ENCODE measurements at regions of chr5 and their contacts with region 1.

Region 1: DNA sequence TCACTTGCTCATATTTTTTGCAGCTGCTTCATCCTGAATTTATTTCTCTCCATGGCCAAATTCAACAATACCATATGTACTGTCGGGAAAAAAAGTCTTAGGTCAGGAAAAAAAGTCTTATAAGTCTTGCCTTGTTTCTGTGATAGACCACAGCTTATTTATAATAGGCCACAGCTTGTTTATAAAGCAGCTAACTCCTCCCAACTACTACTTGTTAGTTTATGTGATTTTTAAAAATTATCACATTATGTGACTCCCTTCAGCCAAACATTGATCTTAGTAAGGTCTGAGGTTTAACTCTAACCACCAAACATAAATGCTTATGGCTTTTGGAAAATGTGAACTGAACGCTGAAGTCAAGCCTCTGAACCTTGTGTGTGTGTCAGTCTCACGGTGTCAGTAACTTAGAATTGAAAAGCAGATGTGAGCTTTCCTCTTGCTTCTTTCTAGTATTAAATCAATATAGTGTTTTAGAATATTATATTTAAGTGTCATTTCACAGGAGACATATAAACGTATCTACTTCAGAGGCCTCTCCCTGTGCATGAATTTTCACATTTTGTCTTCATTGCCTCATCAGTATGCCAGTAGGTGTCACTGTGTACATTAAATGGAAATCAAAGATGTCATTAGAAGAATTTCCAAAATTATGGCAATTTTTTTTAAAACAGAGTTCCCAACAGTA is 51.3 kb downstream of the SNX24 start:
- DNase-seq: peak; percentile 54
- H3K4me3 Mint-ChIP-seq: no peak overlapping the region
- H3K27ac Mint-ChIP-seq: no peak overlapping the region
- H3K4me1 Mint-ChIP-seq: peaks cover 4% of the 10 kb centered on the region
- H3K27me3 Mint-ChIP-seq: no peaks in the 10 kb centered on the region
- CTCF ChIP-seq: peak; percentile 71

Region 2: DNA sequence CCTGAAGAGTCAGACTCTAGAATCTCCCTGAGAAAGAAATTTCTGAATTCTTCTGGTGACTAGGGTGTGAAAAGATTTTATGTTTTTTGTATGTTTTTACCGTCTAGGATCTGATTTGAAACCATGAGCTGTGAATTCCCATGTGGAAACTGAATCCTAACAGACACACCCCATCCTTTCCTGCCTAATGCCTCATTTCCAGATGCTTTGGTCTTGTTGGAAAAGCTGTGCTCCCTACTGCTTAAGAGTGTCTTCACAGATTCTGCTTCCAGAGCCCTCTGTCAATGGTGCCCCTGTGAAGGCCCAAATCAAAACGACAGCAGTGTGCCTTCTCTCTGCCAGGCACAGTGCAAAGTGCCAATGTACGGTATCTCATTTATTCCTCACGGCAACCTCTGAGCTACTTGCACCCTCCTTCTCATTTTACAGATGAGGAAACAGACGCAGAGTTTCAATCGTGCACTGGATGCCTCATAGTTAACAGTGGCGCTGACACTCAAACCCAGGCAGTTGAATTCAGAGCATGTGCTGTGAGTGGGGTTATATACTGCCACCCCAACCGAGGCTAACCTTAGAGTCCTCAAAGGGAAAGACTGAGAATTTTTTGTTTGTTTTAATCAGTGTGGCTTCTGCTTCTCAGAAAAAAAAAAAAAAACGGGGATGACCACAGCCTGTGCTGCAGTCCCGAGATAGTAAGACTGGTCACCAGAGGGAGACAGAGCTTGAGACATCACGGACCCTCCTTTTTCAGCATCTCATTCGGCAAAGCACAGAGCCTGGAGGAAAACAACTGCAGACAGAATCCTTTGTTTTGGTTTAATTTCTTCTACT is 396.3 kb before region 1 on chr5:
- CTCF ChIA-PET with region 1: interaction called, 3 read pairs
- POLR2A ChIA-PET with region 1: no interaction called
- intact Hi-C with region 1: loop called (anchors 5 kb)
- DNase-seq: peak; percentile 76
- H3K4me3 Mint-ChIP-seq: peak overlapping the region; percentile 5
- H3K27ac Mint-ChIP-seq: peak overlapping the region; percentile 71
- H3K4me1 Mint-ChIP-seq: peaks cover 23% of the 10 kb centered on the region
- H3K27me3 Mint-ChIP-seq: no peaks in the 10 kb centered on the region
- CTCF ChIP-seq: peak; percentile 53

Region 3: GRCh38 chr5:122882837-122883236 is 13.9 kb before region 1 on chr5:
- CTCF ChIA-PET with region 1: interaction called, 15 read pairs
- POLR2A ChIA-PET with region 1: no interaction called
- intact Hi-C with region 1: no loop called
- DNase-seq: peak; percentile 39
- H3K4me3 Mint-ChIP-seq: peak overlapping the region; percentile 2
- H3K27ac Mint-ChIP-seq: peak overlapping the region; percentile 8
- H3K4me1 Mint-ChIP-seq: peaks cover 24% of the 10 kb centered on the region
- H3K27me3 Mint-ChIP-seq: no peaks in the 10 kb centered on the region
- CTCF ChIP-seq: no peak

Region 4: GRCh38 chr5:122915717-122916461 is 19.1 kb after region 1 on chr5:
- CTCF ChIA-PET with region 1: interaction called, 13 read pairs
- POLR2A ChIA-PET with region 1: no interaction called
- intact Hi-C with region 1: no loop called
- DNase-seq: no peak
- H3K4me3 Mint-ChIP-seq: no peak overlapping the region
- H3K27ac Mint-ChIP-seq: peak overlapping the region; percentile 2
- H3K4me1 Mint-ChIP-seq: peaks cover 12% of the 10 kb centered on the region
- H3K27me3 Mint-ChIP-seq: no peaks in the 10 kb centered on the region
- CTCF ChIP-seq: no peak

Region 5: GRCh38 chr5:123036391-123037103 is 139.8 kb after region 1 on chr5 and contains the start of gene PPIC:
- CTCF ChIA-PET with region 1: no interaction called
- POLR2A ChIA-PET with region 1: interaction called, 3 read pairs
- intact Hi-C with region 1: loop called (anchors 2 kb)
- DNase-seq: peak; percentile 88
- H3K4me3 Mint-ChIP-seq: peak within 1 kb of the TSS; percentile 80
- H3K27ac Mint-ChIP-seq: peak within 1 kb of the TSS; percentile 86
- H3K4me1 Mint-ChIP-seq: peaks cover 38% of the 10 kb centered on the region
- H3K27me3 Mint-ChIP-seq: no peaks in the 10 kb centered on the region
- CTCF ChIP-seq: no peak
- total RNA-seq, gene PPIC: 45.3 and 65.0 TPM in 2 replicates

Region 6: GRCh38 chr5:123157791-123158581 is 261.2 kb after region 1 on chr5:
- CTCF ChIA-PET with region 1: interaction called, 7 read pairs
- POLR2A ChIA-PET with region 1: interaction called, 3 read pairs
- intact Hi-C with region 1: loop called (anchors 1 kb)
- DNase-seq: peak; percentile 82
- H3K4me3 Mint-ChIP-seq: peak overlapping the region; percentile 47
- H3K27ac Mint-ChIP-seq: peak overlapping the region; percentile 68
- H3K4me1 Mint-ChIP-seq: peaks cover 20% of the 10 kb centered on the region
- H3K27me3 Mint-ChIP-seq: no peaks in the 10 kb centered on the region
- CTCF ChIP-seq: no peak

Region 7: GRCh38 chr5:123344816-123345426 is 448.2 kb after region 1 on chr5:
- CTCF ChIA-PET with region 1: interaction called, 13 read pairs
- POLR2A ChIA-PET with region 1: no interaction called
- intact Hi-C with region 1: loop called (anchors 2 kb)
- DNase-seq: peak; percentile 56
- H3K4me3 Mint-ChIP-seq: no peak overlapping the region
- H3K27ac Mint-ChIP-seq: no peak overlapping the region
- H3K4me1 Mint-ChIP-seq: no peaks in the 10 kb centered on the region
- H3K27me3 Mint-ChIP-seq: no peaks in the 10 kb centered on the region
- CTCF ChIP-seq: peak; percentile 66

Measured in MCF 10A (cell line).